ENCODE measurements at regions of chr13 and their contacts with region 1.

Region 1: DNA sequence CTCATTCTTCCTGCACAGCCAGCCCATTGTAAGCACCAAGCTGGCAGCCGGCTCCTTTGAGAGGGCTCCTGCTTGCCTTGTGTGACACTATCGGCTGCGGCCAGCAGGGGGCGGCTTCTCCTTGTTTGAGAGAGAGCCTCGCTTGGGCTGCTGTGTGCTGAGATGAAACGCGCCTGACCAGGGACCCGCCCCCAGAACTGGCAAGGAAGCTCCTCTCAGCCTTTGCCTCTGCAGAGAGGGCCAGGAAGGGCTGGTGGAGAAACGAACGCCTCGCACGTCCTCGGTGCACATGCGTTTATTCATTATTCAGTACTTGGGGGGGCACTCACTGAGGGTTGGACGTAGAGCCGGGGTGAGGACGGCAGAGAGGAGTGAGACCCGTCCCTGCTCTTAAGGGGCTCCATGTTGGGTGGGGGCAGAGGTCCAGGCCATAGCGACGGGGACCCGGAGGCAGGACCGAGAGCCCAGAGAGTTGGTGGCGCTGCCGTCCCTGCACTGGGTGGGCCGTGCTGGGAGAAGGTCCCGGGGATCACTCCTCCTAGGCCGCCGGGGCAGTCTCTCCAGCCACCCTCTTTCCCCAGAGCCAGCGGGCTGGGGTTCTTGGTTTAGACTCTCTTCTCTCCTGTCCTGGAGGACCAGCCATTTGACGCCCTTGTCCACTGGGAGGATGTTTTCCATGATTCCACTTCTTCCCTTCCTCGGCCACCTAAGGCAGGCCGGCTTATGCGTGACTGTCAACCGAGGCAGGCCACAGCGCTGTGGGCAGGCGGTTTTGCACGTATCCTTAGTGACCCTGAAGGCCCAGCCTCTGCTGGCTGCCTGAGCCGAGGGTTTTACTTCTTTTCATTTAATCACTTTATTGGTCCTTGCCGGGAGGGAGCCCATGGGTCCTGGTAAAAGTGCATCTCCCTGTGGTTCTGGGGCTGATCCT is 174.5 kb downstream of the KATNAL1 start:
- DNase-seq: peak; percentile 96 to 99 (median 98)
- H3K4me3 ChIP-seq: no peak overlapping the region
- H3K27ac ChIP-seq: no peak overlapping the region
- H3K4me1 ChIP-seq: no peaks in the 10 kb centered on the region
- H3K27me3 ChIP-seq: no peaks in the 10 kb centered on the region
- CTCF ChIP-seq: peak; percentile 88 to 97 (median 94)
- POLR2A ChIP-seq: no peak

Region 2: GRCh38 chr13:30026093-30026492 is 106.8 kb before region 1 on chr13:
- intact Hi-C with region 1: no loop called
- DNase-seq: no peak
- H3K4me3 ChIP-seq: no peak overlapping the region
- H3K27ac ChIP-seq: no peak overlapping the region
- H3K4me1 ChIP-seq: no peaks in the 10 kb centered on the region
- H3K27me3 ChIP-seq: no peaks in the 10 kb centered on the region
- CTCF ChIP-seq: no peak
- POLR2A ChIP-seq: no peak

Region 3: DNA sequence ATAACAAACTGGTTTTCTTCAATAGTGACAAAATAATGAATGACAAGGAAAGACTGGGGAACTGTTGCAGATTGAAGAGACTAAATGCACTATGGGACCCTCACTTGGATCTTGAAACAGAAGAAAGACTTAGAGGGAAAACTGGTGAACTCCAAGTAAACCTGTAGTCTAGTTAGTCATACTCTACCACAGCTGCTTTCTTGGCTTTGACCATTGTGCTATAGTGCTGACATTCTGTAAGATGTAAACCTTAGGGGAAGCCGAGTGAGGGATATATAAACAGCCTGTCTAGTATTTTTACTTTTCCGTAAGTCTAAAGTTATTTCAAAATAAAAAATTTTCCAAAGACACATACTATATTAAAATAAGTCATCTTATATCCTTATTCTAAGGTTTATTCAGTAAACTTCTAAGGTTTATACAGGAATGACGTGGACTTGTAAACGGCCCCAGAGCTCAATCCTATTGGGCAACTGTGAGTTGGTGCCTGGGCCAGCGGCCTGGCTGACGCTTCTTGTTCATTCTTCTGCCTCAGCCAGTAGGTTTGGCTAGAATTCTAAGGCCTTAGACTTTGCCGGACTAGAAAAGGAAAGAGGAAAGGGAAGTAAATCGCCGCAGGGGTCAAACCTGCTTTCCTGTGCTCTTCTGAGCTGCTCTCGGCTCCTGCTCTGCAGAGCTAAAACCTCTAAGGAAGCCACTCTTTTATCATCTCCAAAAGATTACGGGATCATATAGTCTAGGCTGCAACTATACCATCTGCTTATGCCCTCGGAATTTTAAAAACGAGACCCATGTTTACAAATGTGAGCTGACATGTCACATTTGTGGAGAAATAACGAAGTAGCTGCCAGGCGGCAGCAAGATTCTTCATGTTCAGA is 255.8 kb after region 1 on chr13:
- intact Hi-C with region 1: loop called in 1 of 2 experiments (anchors 10 kb)
- DNase-seq: peak in 2 of 7 donors; percentile 23
- H3K4me3 ChIP-seq: no peak overlapping the region
- H3K27ac ChIP-seq: no peak overlapping the region
- H3K4me1 ChIP-seq: no peaks in the 10 kb centered on the region
- H3K27me3 ChIP-seq: no peaks in the 10 kb centered on the region
- CTCF ChIP-seq: no peak
- POLR2A ChIP-seq: no peak

Region 4: GRCh38 chr13:30453727-30454126 is 320.8 kb after region 1 on chr13:
- intact Hi-C with region 1: loop called in 1 of 2 experiments (anchors 10 kb)
- DNase-seq: no peak
- H3K4me3 ChIP-seq: no peak overlapping the region
- H3K27ac ChIP-seq: no peak overlapping the region
- H3K4me1 ChIP-seq: no peaks in the 10 kb centered on the region
- H3K27me3 ChIP-seq: no peaks in the 10 kb centered on the region
- CTCF ChIP-seq: peak in 2 of 6 experiments; percentile 8 to 20
- POLR2A ChIP-seq: no peak

Region 5: GRCh38 chr13:30802953-30803478 is 670.1 kb after region 1 on chr13:
- intact Hi-C with region 1: loop called in 1 of 2 experiments (anchors 10 kb)
- DNase-seq: peak; percentile 90 to 96 (median 93)
- H3K4me3 ChIP-seq: peak overlapping the region in 2 of 4 donors; percentile 11 to 52
- H3K27ac ChIP-seq: peak overlapping the region in 3 of 5 donors; percentile 23 to 71 (median 28)
- H3K4me1 ChIP-seq: peaks cover 18 to 33% of the 10 kb centered on the region in 2 donors
- H3K27me3 ChIP-seq: no peaks in the 10 kb centered on the region
- CTCF ChIP-seq: peak; percentile 92 to 98 (median 96)
- POLR2A ChIP-seq: peak in 1 of 2 donors; percentile 57

Region 6: GRCh38 chr13:31044377-31045285 is 911.7 kb after region 1 on chr13:
- intact Hi-C with region 1: loop called in 1 of 2 experiments (anchors 5 kb)
- DNase-seq: peak; percentile 74 to 92 (median 81)
- H3K4me3 ChIP-seq: no peak overlapping the region
- H3K27ac ChIP-seq: peak overlapping the region in 2 of 5 donors; percentile 60 to 71
- H3K4me1 ChIP-seq: peaks cover 12 to 21% of the 10 kb centered on the region in 2 donors
- H3K27me3 ChIP-seq: no peaks in the 10 kb centered on the region
- CTCF ChIP-seq: peak; percentile 86 to 97 (median 91)
- POLR2A ChIP-seq: no peak